WTC11 (cell line): ENCODE measurements at regions of chr11 and their contacts with region 1.

Region 1: DNA sequence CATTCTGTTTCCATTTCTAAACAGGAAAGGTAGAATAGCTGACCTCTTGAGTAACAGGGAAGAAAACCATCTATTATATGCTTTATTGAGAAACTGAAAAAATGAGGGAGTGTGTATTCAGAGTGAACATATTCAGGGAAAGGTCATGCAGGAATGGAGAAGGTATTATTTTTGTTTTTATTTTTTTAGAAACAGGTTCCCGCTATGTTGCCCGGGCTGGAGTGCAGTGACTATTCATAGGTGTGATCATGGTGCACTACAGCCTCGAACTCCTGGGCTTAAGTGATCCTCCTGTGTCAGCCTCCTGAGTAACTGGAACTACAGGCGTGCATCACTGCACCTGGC is 8.8 kb upstream of the RCE1 start:
- DNase-seq: no peak
- ATAC-seq: no peak
- H3K4me3 Mint-ChIP-seq: no peak overlapping the region
- H3K27ac Mint-ChIP-seq: no peak overlapping the region; the same call in 1 of the 2 replicates
- H3K4me1 Mint-ChIP-seq: peaks cover 2% of the 10 kb centered on the region
- H3K27me3 Mint-ChIP-seq: no peaks in the 10 kb centered on the region
- CTCF ChIP-seq: no peak; the same call in none of the 2 replicates

Region 2: DNA sequence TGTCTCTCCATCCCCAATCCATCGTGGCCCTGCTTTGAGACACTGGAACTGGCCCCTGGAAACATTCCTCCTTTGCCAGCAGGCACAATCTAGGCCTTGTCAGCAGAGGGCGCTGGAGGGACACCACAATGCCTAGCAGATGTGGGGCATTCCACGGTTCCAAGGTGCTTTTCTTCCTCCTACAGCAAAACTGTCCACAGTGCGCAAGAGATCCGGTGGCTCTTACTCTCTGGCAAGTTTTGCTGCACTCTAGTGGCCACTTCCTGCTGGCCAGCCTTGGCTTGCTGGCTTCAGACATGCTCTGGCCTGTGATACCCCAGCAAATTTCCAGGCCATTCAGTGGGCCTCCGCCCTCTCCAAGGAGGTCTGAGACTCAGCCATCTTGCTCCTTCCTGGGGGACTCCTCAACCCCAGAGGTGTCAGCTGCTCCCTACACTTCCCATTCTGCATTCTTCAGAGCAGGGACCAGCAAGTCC is 139.7 kb before region 1 on chr11:
- CTCF ChIA-PET with region 1: interaction called, 22 read pairs
- POLR2A ChIA-PET with region 1: no interaction called
- DNase-seq: peak; percentile 94
- ATAC-seq: peak; percentile 95
- H3K4me3 Mint-ChIP-seq: no peak overlapping the region
- H3K27ac Mint-ChIP-seq: 0 out of 2 replicates have a peak overlapping the region, but pooled peaks have one; percentile 27
- H3K4me1 Mint-ChIP-seq: no peaks in the 10 kb centered on the region
- H3K27me3 Mint-ChIP-seq: no peaks in the 10 kb centered on the region
- CTCF ChIP-seq: peak; percentile 76

Region 3: GRCh38 chr11:66875378-66875777 is 40.9 kb after region 1 on chr11:
- CTCF ChIA-PET with region 1: no interaction called
- POLR2A ChIA-PET with region 1: no interaction called
- DNase-seq: no peak
- ATAC-seq: no peak
- H3K4me3 Mint-ChIP-seq: no peak overlapping the region
- H3K27ac Mint-ChIP-seq: 0 out of 2 replicates have a peak overlapping the region, but pooled peaks have one; percentile 11
- H3K4me1 Mint-ChIP-seq: peaks cover 10% of the 10 kb centered on the region
- H3K27me3 Mint-ChIP-seq: no peaks in the 10 kb centered on the region
- CTCF ChIP-seq: no peak